ENCODE measurements at regions of chr15 and their contacts with region 1.

Region 1: GRCh38 chr15:54519577-54519976 is 541.3 kb downstream of the UNC13C start:
- DNase-seq: peak; percentile 52
- ATAC-seq: peak; percentile 74
- H3K4me3 ChIP-seq: no peak overlapping the region
- H3K27ac ChIP-seq: peak overlapping the region; percentile 22; the same call in 1 of the 2 replicates
- H3K4me1 ChIP-seq: no peaks in the 10 kb centered on the region
- H3K27me3 ChIP-seq: no peaks in the 10 kb centered on the region
- CTCF ChIP-seq: no peak
- EP300 ChIP-seq: peak; percentile 42 to 53; a peak in 2 of 4 replicates
- POLR2A ChIP-seq: no peak
- RAD21 ChIP-seq: no peak

Region 2: DNA sequence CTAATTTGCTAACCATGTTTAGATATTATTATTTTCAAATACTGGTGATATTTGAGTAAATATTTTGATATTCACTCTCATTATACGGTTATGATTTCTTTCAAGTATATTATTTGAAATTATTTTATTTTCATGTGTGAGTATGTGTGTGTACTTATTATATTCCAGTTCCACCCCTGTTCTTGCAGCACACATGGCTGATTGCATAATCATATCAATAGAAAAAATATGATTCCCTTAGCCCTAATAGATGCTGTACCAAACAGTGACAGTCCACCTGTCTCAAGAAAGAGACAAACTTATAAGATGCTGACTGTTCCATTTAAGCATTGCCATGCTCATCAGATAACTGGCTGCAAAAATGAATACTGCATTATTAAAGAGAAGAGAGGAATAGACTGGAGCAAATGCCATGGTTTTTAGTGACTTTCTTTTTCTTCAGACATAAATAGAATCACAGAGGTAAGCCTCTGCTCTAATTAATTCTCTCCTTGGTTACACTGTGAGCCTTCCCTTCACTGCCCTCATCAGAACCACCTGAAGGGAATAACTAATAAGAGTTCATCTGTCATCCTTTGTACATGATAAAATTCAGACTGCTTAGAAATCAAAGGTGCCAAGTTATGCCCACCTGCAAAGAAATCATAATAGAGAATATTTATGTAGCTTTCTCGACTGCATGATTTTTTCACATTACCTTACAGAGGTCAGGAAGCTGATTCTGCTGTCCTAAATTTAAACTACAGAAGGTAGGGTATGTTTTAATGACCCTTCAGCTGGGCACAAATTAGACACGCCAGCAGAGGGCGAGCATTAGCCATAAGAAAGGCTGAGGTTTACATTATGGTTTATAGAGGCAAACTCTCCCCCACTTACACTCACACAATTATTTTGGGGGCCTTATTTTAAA is 557.0 kb before region 1 on chr15:
- CTCF ChIA-PET with region 1: interaction called, 4 read pairs
- POLR2A ChIA-PET with region 1: no interaction called
- RAD21 ChIA-PET with region 1: interaction called, 4 read pairs
- SMC1A ChIA-PET with region 1: no interaction called
- in situ Hi-C with region 1: no loop called
- intact Hi-C with region 1: loop called (anchors 5 kb)
- DNase-seq: no peak
- ATAC-seq: peak; percentile 94
- H3K4me3 ChIP-seq: no peak overlapping the region
- H3K27ac ChIP-seq: no peak overlapping the region
- H3K4me1 ChIP-seq: no peaks in the 10 kb centered on the region
- H3K27me3 ChIP-seq: no peaks in the 10 kb centered on the region
- CTCF ChIP-seq: peak; percentile 42 to 70 (median 61)
- EP300 ChIP-seq: no peak
- POLR2A ChIP-seq: no peak
- RAD21 ChIP-seq: peak; percentile 68

Region 3: GRCh38 chr15:54150255-54150654 is 369.3 kb before region 1 on chr15:
- CTCF ChIA-PET with region 1: interaction called, 3 read pairs
- POLR2A ChIA-PET with region 1: no interaction called
- RAD21 ChIA-PET with region 1: interaction called, 13 read pairs
- SMC1A ChIA-PET with region 1: interaction called, 4 read pairs
- in situ Hi-C with region 1: no loop called
- intact Hi-C with region 1: no loop called
- DNase-seq: peak; percentile 69
- ATAC-seq: peak; percentile 96
- H3K4me3 ChIP-seq: no peak overlapping the region
- H3K27ac ChIP-seq: no peak overlapping the region
- H3K4me1 ChIP-seq: no peaks in the 10 kb centered on the region
- H3K27me3 ChIP-seq: no peaks in the 10 kb centered on the region
- CTCF ChIP-seq: no peak
- EP300 ChIP-seq: peak; percentile 95
- POLR2A ChIP-seq: no peak
- RAD21 ChIP-seq: peak; percentile 0; the same call in 1 of the 2 replicates

Region 4: GRCh38 chr15:54304321-54304720 is 215.3 kb before region 1 on chr15:
- CTCF ChIA-PET with region 1: no interaction called
- POLR2A ChIA-PET with region 1: interaction called, 4 read pairs
- RAD21 ChIA-PET with region 1: interaction called, 25 read pairs
- SMC1A ChIA-PET with region 1: interaction called, 25 read pairs
- in situ Hi-C with region 1: no loop called
- intact Hi-C with region 1: no loop called
- DNase-seq: no peak
- ATAC-seq: no peak
- H3K4me3 ChIP-seq: no peak overlapping the region
- H3K27ac ChIP-seq: no peak overlapping the region
- H3K4me1 ChIP-seq: no peaks in the 10 kb centered on the region
- H3K27me3 ChIP-seq: no peaks in the 10 kb centered on the region
- CTCF ChIP-seq: no peak
- EP300 ChIP-seq: no peak
- POLR2A ChIP-seq: no peak
- RAD21 ChIP-seq: no peak

Region 5: DNA sequence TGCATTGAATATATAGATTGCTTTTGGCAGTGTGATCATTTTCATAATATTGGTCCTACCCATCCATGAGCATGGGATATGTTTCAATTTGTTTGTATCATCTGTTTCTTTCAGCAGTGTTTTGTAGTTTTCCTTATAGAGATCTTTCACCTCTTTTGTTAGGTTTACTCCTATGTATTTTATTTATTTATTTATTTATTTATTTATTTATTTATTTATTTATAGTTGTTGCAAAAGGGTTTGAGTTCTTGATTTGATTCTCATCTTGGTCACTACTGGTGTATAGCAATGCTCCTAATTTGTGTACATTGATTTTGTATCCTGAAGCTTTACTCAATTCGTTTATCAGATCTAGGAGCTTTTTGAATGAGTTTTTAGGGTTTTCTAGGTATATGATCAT is 63.2 kb before region 1 on chr15:
- CTCF ChIA-PET with region 1: no interaction called
- POLR2A ChIA-PET with region 1: no interaction called
- RAD21 ChIA-PET with region 1: no interaction called
- SMC1A ChIA-PET with region 1: interaction called, 3 read pairs
- in situ Hi-C with region 1: no loop called
- intact Hi-C with region 1: loop called (anchors 10 kb)
- DNase-seq: no peak
- ATAC-seq: no peak
- H3K4me3 ChIP-seq: no peak overlapping the region
- H3K27ac ChIP-seq: no peak overlapping the region
- H3K4me1 ChIP-seq: no peaks in the 10 kb centered on the region
- H3K27me3 ChIP-seq: no peaks in the 10 kb centered on the region
- CTCF ChIP-seq: no peak
- EP300 ChIP-seq: no peak
- POLR2A ChIP-seq: no peak
- RAD21 ChIP-seq: no peak

Region 6: DNA sequence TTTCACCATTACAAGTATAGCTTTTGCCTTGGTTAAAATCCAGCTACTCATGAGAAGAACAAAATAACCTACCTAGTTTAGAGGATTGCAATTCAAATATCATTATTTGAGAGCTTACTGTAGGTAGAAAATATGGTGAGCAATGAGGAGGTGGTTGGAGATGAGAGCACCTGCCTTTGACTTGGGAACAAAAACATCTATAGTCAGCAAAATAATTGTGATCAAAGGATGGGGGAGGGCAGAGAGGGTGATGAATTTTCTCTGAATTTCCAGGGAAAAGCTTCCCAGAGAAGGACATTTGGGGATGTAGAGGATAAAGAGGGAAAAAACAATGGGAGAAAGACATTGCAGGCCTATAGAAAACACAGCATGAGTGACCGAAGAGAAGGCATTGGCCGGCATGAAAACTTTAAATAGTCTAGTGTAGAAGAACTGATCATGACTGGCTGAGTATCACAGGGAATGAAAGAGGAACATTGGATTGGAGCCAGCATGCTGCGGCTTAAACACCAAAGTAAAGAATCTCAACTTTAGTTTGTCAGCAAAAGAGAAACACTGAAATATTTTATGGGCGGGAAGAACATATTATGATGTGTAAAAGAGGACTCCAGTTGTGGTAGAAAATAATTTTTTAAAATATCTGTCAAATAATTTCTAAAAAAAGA is 40.0 kb after region 1 on chr15:
- CTCF ChIA-PET with region 1: interaction called, 7 read pairs
- POLR2A ChIA-PET with region 1: interaction called, 3 read pairs
- RAD21 ChIA-PET with region 1: interaction called, 4 read pairs
- SMC1A ChIA-PET with region 1: interaction called, 12 read pairs
- in situ Hi-C with region 1: no loop called
- intact Hi-C with region 1: no loop called
- DNase-seq: no peak
- ATAC-seq: peak; percentile 41
- H3K4me3 ChIP-seq: no peak overlapping the region
- H3K27ac ChIP-seq: no peak overlapping the region
- H3K4me1 ChIP-seq: no peaks in the 10 kb centered on the region
- H3K27me3 ChIP-seq: no peaks in the 10 kb centered on the region
- CTCF ChIP-seq: no peak
- EP300 ChIP-seq: no peak
- POLR2A ChIP-seq: no peak
- RAD21 ChIP-seq: no peak

Region 7: GRCh38 chr15:55108858-55109518 is 589.4 kb after region 1 on chr15:
- CTCF ChIA-PET with region 1: interaction called, 3 read pairs
- POLR2A ChIA-PET with region 1: no interaction called
- RAD21 ChIA-PET with region 1: no interaction called
- SMC1A ChIA-PET with region 1: interaction called, 4 read pairs
- in situ Hi-C with region 1: no loop called
- intact Hi-C with region 1: loop called (anchors 5 kb)
- DNase-seq: peak; percentile 9
- ATAC-seq: peak; percentile 91
- H3K4me3 ChIP-seq: no peak overlapping the region
- H3K27ac ChIP-seq: no peak overlapping the region
- H3K4me1 ChIP-seq: no peaks in the 10 kb centered on the region
- H3K27me3 ChIP-seq: no peaks in the 10 kb centered on the region
- CTCF ChIP-seq: peak; percentile 74 to 83 (median 77)
- EP300 ChIP-seq: 0 out of 4 replicates have a peak, but pooled peaks of 1 of the 2 experiments have one; percentile 26
- POLR2A ChIP-seq: no peak
- RAD21 ChIP-seq: peak; percentile 70